ENCODE measurements at regions of chr19 and their contacts with region 1.

Region 1: DNA sequence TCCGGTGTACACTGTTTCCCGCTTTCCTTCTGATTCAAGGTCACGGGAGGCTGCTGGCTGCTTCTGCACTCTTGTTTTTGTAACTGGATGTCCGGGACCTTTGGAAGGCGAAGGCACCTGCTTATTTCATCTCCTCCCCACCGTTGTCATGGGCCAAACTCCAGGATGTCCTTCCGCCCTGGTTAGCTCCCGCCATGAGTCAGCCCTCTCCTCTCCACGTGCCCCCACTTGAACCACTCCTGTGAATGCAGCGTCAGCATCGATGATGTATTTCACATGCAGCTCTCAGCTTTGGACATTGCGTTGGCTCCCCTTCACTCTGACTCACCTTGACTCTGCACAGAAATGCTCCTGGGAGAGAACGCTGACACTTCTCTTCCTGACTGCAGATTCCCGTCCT is 5.5 kb upstream of the GALP start:
- DNase-seq: no peak
- H3K4me3 Mint-ChIP-seq: no peak overlapping the region
- H3K27ac Mint-ChIP-seq: no peak overlapping the region
- H3K4me1 Mint-ChIP-seq: peaks cover 3% of the 10 kb centered on the region
- H3K27me3 Mint-ChIP-seq: peaks cover 3% of the 10 kb centered on the region

Region 2: DNA sequence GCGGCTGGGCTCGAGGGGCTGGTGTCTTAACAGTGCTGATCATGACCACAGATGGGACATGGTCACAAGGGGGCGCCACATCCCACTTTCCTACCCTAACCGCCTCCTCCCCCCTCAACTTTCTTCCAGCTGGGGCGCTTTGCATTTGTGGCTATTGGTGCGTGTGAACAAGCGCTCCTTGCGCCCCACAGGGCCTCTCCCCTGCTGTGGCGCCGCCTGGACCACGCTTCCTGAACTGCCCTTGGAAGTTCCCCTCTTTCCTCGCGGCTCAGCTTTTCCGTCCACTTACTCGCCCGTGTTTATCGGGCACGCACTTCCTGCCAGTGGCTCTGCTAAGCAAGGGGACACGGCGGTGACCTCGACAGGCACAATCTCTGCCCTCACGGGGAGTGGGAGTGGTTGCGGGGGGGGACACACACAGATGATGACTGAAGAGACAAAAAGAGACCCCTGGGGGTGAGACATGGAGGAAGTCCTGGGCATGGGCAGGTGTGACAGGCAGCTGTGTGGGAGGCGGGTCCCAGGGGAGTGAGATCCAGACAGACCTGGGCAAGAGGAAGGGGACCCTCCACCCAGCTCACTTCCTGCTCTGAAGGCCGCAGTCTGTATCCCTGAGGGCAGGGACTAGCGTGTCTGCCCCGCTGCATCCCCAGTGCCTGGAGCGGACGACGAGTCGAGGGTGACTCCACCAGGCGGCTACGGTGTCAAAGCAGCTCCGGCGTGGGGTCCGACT is 89.4 kb before region 1 on chr19:
- CTCF ChIA-PET with region 1: interaction called, 15 read pairs
- intact Hi-C with region 1: loop called (anchors 1 kb)
- DNase-seq: peak; percentile 84
- H3K4me3 Mint-ChIP-seq: peak overlapping the region; percentile 41
- H3K27ac Mint-ChIP-seq: no peak overlapping the region
- H3K4me1 Mint-ChIP-seq: peaks cover 10% of the 10 kb centered on the region
- H3K27me3 Mint-ChIP-seq: peaks cover 17% of the 10 kb centered on the region

Region 3: DNA sequence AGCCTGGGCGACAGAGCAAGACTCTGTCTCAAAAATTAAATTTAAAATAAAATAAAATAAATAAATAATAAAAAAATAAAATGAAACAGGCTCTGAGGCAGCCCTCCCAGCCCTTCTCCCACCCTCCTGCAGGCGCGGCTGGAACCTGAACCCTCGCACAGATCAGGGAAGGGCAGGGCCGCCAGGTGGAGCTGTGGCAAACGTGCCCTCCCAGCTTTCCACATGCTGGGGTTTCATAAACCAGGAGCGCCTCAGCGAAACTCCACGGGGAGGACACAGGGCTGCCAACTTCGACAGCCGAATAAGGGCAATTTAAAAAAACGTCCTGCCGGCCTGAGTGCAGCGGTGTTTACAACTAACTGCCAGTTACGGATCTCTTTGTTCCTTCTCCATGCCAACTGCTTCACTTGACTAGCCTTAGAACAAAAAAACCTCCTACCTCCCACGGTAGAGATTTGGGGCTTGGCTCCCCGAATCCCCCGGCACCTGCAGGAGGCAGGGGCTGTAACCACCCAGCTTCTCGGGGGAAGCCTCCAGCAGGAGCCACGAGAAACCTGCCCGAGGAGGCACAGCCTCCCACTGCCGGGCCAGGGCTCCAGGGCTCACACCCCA is 65.1 kb before region 1 on chr19:
- CTCF ChIA-PET with region 1: no interaction called
- intact Hi-C with region 1: loop called (anchors 1 kb)
- DNase-seq: peak; percentile 62
- H3K4me3 Mint-ChIP-seq: no peak overlapping the region
- H3K27ac Mint-ChIP-seq: no peak overlapping the region
- H3K4me1 Mint-ChIP-seq: peaks cover 34% of the 10 kb centered on the region
- H3K27me3 Mint-ChIP-seq: no peaks in the 10 kb centered on the region

Region 4: DNA sequence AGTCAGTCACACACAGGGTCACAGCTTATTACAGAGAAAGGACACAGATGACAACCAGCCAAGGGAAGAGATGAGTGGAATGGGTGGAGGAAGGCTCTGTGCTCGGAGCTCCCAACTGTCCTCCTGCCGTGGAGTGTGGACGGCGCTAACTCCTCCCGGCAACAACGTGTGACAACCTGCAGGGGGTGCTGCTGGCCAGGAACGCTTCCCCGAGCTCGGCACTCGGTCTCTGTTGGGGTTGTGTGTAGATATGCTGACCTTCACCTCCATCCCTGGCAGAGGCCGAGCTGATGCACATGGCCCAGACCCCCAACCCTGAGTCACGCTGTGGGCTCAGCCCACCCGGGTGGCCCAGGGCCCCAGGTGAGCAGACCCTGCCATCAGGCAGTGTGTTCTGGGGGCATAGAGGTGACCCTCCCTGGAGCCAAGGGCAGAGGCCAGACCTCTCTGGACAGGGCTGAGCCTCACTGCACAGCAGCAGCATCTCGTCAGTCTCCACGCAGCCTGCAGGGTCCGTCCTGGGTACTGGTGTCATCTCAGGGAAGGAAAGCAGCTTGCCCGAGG is 15.1 kb before region 1 on chr19:
- CTCF ChIA-PET with region 1: interaction called, 11 read pairs
- intact Hi-C with region 1: no loop called
- DNase-seq: peak; percentile 15
- H3K4me3 Mint-ChIP-seq: no peak overlapping the region
- H3K27ac Mint-ChIP-seq: no peak overlapping the region
- H3K4me1 Mint-ChIP-seq: peaks cover 13% of the 10 kb centered on the region
- H3K27me3 Mint-ChIP-seq: no peaks in the 10 kb centered on the region

Measured in activated naive CD4-positive, alpha-beta T cell treated with anti-CD3 and anti-CD28 coated beads for 36 hours (primary cell).